Naive thymus-derived CD4-positive, alpha-beta T cell (primary cell): ENCODE measurements at regions of chr19 and their contacts with region 1.

Region 1: DNA sequence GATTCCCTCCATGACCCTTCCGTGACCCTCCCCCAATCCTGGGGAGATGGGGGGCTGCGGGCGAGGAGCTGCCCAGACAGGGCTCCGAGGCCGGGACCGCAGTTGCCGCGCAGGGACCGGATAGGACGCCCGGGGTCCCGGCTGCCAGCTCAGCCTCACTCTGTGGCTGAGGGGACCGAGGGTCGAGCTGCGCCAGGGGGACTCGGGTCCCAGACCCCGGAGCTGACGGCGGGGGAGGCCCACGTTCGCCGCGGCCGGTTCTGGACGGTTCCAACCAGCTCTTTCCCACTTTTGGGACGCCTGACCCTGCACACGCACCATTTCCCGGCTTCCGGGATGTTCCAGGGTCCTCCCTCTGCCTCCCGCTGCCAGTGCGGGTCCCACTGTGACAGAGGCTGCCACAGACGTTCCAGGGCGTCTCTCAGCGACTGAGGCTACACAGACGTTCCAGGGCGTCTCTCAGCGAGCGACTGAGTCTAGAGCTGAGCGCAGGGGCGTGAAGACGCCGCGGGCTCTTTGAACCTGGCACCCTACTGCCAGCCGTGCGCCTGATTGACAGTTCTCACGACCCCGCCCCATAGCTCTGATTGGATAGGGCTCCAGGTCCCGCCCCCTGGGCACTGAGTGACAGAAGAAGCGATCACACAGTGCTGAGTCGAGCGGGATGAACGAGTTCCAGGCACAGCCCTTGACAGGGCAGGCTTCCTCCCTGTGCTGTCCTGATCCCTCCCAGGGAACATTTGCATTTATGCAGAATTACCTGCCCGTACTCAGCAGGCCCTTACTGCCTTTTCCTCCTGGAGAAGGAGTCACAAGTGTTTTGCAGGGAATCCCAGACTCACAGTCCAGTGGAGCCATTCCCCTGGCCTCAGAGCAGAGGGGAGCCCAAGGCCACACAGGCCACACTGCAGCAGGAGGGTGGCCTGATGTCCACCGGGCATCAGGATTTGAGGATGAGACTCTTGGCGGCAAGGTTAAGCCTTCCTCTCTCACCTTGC is at the start of gene ZNF563:
- DNase-seq: peak; percentile 91 to 99 (median 98)
- ATAC-seq: peak; percentile 99
- H3K4me3 ChIP-seq: peak within 1 kb of the TSS; percentile 61
- H3K4me3 Mint-ChIP-seq: peak within 1 kb of the TSS; percentile 90 to 100 (median 96)
- H3K27ac ChIP-seq: peak within 1 kb of the TSS; percentile 92
- H3K27ac Mint-ChIP-seq: peak within 1 kb of the TSS; percentile 92 to 99 (median 97)
- H3K4me1 ChIP-seq: peaks cover 9 to 22% of the 10 kb centered on the region in 2 donors
- H3K4me1 Mint-ChIP-seq: peaks cover 23 to 49% (median 40%) of the 10 kb centered on the region in 7 donors
- H3K27me3 ChIP-seq: no peaks in the 10 kb centered on the region
- H3K27me3 Mint-ChIP-seq: no peaks in the 10 kb centered on the region
- total RNA-seq, gene ZNF563: 2.8 to 23.2 (median 6.1) TPM

Region 2: GRCh38 chr19:12202250-12202649 is 131.2 kb before region 1 on chr19:
- CTCF ChIA-PET with region 1: no interaction called
- POLR2A ChIA-PET with region 1: interaction called, 5 read pairs
- intact Hi-C with region 1: loop called in 1 of 2 experiments (anchors 2 kb)
- DNase-seq: peak in 8 of 9 donors; percentile 20 to 68 (median 46)
- ATAC-seq: peak; percentile 82
- H3K4me3 ChIP-seq: no peak overlapping the region
- H3K4me3 Mint-ChIP-seq: peak overlapping the region in 4 of 10 donors; percentile 3 to 54 (median 25)
- H3K27ac ChIP-seq: no peak overlapping the region
- H3K27ac Mint-ChIP-seq: peak overlapping the region in 6 of 9 donors; percentile 26 to 81 (median 61)
- H3K4me1 ChIP-seq: no peaks in the 10 kb centered on the region
- H3K4me1 Mint-ChIP-seq: peaks cover 6 to 53% (median 22%) of the 10 kb centered on the region in 7 donors
- H3K27me3 ChIP-seq: no peaks in the 10 kb centered on the region
- H3K27me3 Mint-ChIP-seq: no peaks in the 10 kb centered on the region

Region 3: DNA sequence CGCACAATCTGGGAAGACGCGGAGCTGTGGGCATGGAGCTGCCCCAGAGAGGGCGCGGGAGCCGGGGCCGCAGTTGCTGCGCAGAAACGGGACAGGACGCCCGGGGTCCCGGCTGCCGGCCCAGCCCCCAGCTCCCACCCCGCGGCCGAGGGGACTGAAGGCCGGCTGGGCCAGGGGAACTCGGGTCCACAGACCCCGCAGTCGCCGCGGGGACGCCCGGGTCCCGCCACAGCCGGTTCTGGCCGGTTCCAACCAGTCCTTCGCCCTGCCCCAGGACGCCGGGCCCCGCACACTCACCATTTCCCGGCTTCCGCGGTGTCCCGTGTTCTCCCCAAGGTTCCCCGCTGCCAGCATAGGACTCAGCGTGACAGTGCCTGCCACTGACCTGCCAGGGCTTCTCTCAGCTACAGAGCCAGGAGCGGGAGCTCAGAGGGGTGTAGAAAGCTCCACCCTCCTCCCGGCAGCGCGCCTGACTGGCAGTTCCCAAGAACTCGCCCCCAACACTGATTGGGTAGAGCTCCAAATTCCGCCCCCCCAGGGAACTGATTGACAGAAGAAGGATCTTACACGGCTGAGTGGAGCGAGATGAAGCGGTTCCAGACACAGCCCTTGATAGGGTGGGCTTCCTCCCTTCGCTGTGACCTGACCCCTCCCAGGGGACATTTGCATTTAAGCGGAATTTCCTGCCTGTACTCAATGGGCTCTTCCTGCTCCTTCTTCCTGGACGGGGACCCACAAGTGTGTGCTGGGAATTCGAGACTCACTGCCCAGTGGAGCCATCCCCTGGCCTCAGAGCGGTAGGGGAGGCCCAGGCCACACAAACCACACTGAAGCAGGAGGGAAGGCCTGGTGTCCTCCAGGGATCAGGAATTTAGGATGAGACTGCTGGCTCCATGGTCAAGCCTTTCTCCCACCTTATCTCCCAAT is 32.0 kb after region 1 on chr19 and contains the start of gene ZNF442:
- CTCF ChIA-PET with region 1: interaction called, 3 read pairs
- POLR2A ChIA-PET with region 1: interaction called, 26 read pairs
- intact Hi-C with region 1: loop called (anchors 1 to 2 kb)
- DNase-seq: peak; percentile 56 to 88 (median 80)
- ATAC-seq: peak; percentile 99
- H3K4me3 ChIP-seq: peak within 1 kb of the TSS; percentile 66
- H3K4me3 Mint-ChIP-seq: peak within 1 kb of the TSS; percentile 92 to 99 (median 97)
- H3K27ac ChIP-seq: peak within 1 kb of the TSS; percentile 68
- H3K27ac Mint-ChIP-seq: peak within 1 kb of the TSS; percentile 68 to 91 (median 85)
- H3K4me1 ChIP-seq: peaks cover 7 to 10% of the 10 kb centered on the region in 2 donors
- H3K4me1 Mint-ChIP-seq: peaks cover 0 to 33% (median 24%) of the 10 kb centered on the region in 7 donors
- H3K27me3 ChIP-seq: no peaks in the 10 kb centered on the region
- H3K27me3 Mint-ChIP-seq: peaks cover 0 to 10% (median 0%) of the 10 kb centered on the region in 5 donors
- total RNA-seq, gene ZNF442: 0.44 to 6.0 (median 0.58) TPM

Region 4: DNA sequence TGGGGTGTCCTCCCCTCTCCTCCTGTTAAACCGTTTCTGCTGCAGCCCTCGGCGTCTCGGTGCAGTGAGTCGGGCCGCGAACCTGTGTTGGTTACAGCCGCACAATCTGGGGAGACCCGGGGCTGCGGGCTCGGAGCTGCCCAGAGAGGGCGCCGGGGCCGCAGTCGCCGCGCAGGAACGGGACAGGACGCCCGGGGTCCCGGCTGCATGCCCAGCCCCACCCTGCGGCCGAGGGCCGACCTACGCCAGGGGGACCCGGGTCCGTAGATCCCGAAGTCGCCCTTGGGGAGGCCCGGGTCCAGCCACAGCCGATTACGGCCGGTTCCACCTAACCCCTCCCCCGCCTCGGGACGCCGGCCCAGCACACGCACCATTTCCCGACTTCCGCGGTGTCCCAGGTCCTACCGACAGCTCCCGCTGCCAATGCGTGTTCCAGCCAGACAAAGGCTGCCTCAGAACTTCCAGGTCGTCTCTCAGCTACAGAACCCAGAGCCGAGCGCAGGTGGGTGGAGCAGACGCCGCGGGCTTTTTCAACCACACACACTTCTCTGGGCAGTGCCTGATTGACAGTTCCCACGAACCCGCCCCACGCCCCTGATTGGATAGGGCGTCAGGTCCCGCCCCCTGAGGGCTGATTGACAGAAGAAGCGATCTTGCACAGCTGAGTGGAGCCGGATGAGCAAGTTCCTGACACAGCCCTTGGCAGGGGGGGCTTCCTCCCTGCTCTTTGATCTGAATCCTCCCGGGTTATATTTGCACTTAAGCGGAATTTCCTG is 107.3 kb after region 1 on chr19 and contains the start of gene ZNF443:
- CTCF ChIA-PET with region 1: no interaction called
- POLR2A ChIA-PET with region 1: interaction called, 6 read pairs
- intact Hi-C with region 1: loop called (anchors 2 kb)
- DNase-seq: peak; percentile 93 to 99 (median 98)
- ATAC-seq: peak; percentile 99
- H3K4me3 ChIP-seq: peak within 1 kb of the TSS; percentile 80
- H3K4me3 Mint-ChIP-seq: peak within 1 kb of the TSS; percentile 97 to 100 (median 100)
- H3K27ac ChIP-seq: peak within 1 kb of the TSS; percentile 72
- H3K27ac Mint-ChIP-seq: peak within 1 kb of the TSS; percentile 84 to 99 (median 96)
- H3K4me1 ChIP-seq: no peaks in the 10 kb centered on the region
- H3K4me1 Mint-ChIP-seq: peaks cover 12 to 34% (median 24%) of the 10 kb centered on the region in 7 donors
- H3K27me3 ChIP-seq: no peaks in the 10 kb centered on the region
- H3K27me3 Mint-ChIP-seq: no peaks in the 10 kb centered on the region
- total RNA-seq, gene ZNF443: 3.0 to 9.1 (median 4.1) TPM

Region 5: GRCh38 chr19:12666265-12667048 is 333.0 kb after region 1 on chr19 and contains the starts of genes MAN2B1 and WDR83:
- CTCF ChIA-PET with region 1: no interaction called
- POLR2A ChIA-PET with region 1: no interaction called
- intact Hi-C with region 1: loop called (anchors 5 to 10 kb)
- DNase-seq: peak; percentile 56 to 86 (median 72)
- ATAC-seq: peak; percentile 82
- H3K4me3 ChIP-seq: peak within 1 kb of the TSS; percentile 92
- H3K4me3 Mint-ChIP-seq: peak within 1 kb of the TSS; percentile 90 to 100 (median 98)
- H3K27ac ChIP-seq: peak within 1 kb of the TSS; percentile 99
- H3K27ac Mint-ChIP-seq: peak within 1 kb of the TSS; percentile 77 to 100 (median 91)
- H3K4me1 ChIP-seq: peaks cover 38% of the 10 kb centered on the region in 2 donors
- H3K4me1 Mint-ChIP-seq: peaks cover 22 to 69% (median 45%) of the 10 kb centered on the region in 7 donors
- H3K27me3 ChIP-seq: no peaks in the 10 kb centered on the region
- H3K27me3 Mint-ChIP-seq: no peaks in the 10 kb centered on the region
- total RNA-seq, gene MAN2B1: 105 to 215 (median 138) TPM
- total RNA-seq, gene WDR83: 7.8 to 18.6 (median 14.7) TPM